Body of pancreas (tissue), 4 donors: ENCODE measurements at regions of chr10 and their contacts with region 1.

Region 1: DNA sequence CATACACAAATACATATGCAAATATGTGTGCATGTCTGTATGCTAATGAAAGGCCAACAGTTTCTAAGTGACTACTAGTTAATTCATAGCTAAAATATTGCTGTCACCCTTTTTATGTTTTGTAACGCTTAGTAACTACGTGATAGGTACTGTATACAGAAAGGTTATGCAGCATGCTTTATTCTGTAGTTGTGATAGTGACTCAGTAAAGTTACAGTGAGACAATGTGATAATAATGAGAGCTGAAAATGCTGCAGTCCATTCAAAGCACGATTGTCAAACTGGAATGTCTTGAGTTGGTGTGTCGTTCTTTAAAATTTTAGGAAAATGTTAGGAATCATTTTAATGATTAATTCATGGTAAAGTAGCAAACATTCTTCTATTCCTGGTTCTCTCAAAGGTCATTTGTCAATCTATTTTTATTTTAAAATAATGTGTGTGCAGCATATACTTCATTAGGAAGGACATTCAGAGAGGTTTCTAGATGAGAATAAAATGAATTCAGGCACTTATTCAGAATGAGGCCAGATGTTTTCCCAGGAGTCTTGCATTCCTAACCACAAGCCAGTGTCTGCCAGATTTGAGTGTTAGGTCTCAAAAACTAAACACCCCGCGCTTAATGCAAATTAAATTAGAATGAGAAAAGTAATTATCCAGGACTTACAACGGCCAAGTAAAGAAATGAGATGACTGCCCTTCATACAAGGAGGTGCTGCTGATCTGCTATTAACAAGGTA is 408.8 kb upstream of the FZD8 start:
- DNase-seq: no peak
- ATAC-seq: no peak
- H3K4me3 ChIP-seq: no peak overlapping the region
- H3K27ac ChIP-seq: no peak overlapping the region
- H3K4me1 ChIP-seq: no peaks in the 10 kb centered on the region
- H3K27me3 ChIP-seq: no peaks in the 10 kb centered on the region
- CTCF ChIP-seq: no peak
- POLR2A ChIP-seq: no peak

Region 2: GRCh38 chr10:35808344-35808743 is 242.6 kb before region 1 on chr10:
- intact Hi-C with region 1: loop called (anchors 5 kb)
- DNase-seq: no peak
- ATAC-seq: no peak
- H3K4me3 ChIP-seq: no peak overlapping the region
- H3K27ac ChIP-seq: no peak overlapping the region
- H3K4me1 ChIP-seq: no peaks in the 10 kb centered on the region
- H3K27me3 ChIP-seq: no peaks in the 10 kb centered on the region
- CTCF ChIP-seq: no peak
- POLR2A ChIP-seq: no peak

Region 3: GRCh38 chr10:35979116-35979515 is 71.8 kb before region 1 on chr10:
- intact Hi-C with region 1: no loop called
- DNase-seq: no peak
- ATAC-seq: no peak
- H3K4me3 ChIP-seq: no peak overlapping the region
- H3K27ac ChIP-seq: no peak overlapping the region
- H3K4me1 ChIP-seq: no peaks in the 10 kb centered on the region
- H3K27me3 ChIP-seq: no peaks in the 10 kb centered on the region
- CTCF ChIP-seq: no peak
- POLR2A ChIP-seq: no peak